Spleen (tissue), 13 donors: ENCODE measurements at regions of chr1 and their contacts with region 1.

Region 1: DNA sequence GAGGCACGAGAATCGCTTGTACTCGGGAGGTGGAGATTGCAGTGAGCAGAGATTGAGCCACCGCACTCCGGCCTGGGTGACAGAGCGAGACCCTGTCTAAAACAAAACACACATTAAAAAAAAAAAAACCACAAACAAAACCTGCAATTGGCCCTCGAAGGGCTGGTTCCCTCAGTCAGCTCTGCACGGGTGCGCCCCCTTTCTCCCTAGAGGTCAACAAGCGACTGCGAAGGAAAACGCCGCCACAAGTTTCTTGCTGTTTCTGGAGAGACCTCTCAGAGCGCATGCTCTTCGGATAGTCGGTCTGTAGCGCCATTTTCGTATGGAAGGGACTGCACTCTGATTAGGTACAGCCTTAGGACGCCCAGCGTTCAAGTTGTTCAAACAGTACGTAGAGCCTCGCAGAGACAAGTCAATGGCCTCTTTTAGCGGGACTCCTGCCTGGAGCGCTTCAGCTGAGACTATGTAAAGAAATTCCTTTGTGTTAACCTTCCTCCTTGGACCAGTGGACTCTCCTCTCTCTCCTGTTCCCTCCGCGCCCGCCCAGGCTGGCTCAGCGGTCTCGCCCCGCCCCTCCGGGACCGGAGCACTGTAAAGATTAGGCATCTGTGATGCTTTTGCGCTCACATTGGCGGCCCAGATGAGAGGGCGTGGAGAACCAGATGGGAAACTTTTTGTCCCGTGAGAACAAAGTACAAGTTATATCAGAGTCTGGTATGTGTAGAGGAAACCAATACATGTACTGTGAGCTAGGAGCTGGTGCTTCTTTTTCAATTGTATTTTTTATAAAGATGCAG is 1.0 kb upstream of the CDC14A start:
- DNase-seq: peak; percentile 94
- H3K4me3 ChIP-seq: peak overlapping the region; percentile 77 to 98 (median 96)
- H3K27ac ChIP-seq: peak overlapping the region; percentile 88 to 96 (median 94)
- H3K4me1 ChIP-seq: peaks cover 24 to 41% (median 36%) of the 10 kb centered on the region in 6 donors
- H3K27me3 ChIP-seq: no peaks in the 10 kb centered on the region
- CTCF ChIP-seq: peak in 8 of 11 experiments; percentile 9 to 50 (median 40)
- POLR2A ChIP-seq: peak in 1 of 3 donors; percentile 61

Region 2: DNA sequence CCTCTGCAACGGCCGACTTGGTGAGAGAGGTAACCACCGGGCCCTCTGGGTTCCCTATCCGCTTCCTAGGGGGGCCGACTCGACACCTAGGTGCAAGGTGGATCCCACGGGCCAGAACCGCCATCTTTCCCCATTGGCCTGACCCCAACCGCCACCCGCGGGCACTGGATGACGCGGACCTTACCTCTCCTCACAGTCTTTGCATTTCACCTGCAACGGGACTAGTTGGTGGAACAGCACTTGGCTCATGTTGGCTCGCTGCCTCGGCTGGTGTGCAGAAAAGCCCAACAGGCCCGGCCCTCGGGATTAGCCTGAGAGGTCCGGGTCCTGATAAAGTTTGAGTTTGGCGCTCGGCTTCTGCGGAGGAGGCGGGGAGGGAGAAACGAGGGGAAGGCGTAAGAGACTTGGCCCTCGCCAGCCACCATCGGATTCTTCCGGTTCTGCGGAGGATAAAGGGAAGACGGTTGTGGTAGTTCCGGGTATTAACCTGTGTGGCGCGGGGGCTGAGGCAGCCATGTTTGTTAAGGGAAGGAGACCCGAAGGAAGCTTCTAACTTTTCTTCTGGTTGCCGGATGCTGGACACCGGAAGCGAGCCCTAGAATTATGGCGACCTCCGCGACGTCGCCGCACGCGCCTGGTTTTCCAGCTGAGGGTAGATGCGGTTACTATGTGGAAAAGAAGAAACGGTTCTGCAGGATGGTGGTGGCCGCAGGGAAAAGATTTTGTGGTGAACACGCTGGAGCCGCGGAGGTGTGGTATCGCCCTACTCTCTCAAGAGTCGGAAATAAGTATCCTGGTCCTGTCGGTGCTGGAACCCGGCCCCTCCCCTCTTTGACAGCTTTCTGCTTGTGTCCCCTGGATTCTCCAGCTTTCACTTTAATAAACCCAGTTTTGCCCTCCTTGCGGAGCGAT is 218.5 kb before region 1 on chr1 and contains the starts of genes SASS6 and TRMT13:
- intact Hi-C with region 1: loop called (anchors 10 kb)
- DNase-seq: peak; percentile 98
- H3K4me3 ChIP-seq: peak within 1 kb of the TSS; percentile 77 to 94 (median 82)
- H3K27ac ChIP-seq: peak within 1 kb of the TSS; percentile 65 to 89 (median 80)
- H3K4me1 ChIP-seq: peaks cover 18 to 62% (median 41%) of the 10 kb centered on the region in 6 donors
- H3K27me3 ChIP-seq: no peaks in the 10 kb centered on the region
- CTCF ChIP-seq: peak in 7 of 11 experiments; percentile 8 to 57 (median 27)
- POLR2A ChIP-seq: peak in 1 of 3 donors; percentile 47
- total RNA-seq, gene SASS6: 3.7 to 9.2 (median 4.6) TPM
- total RNA-seq, gene TRMT13: 20.9 to 37.6 (median 27.9) TPM

Region 3: GRCh38 chr1:100265931-100266740 is 85.2 kb before region 1 on chr1 and contains the start of gene RTCA:
- intact Hi-C with region 1: loop called (anchors 10 kb)
- DNase-seq: peak; percentile 99
- H3K4me3 ChIP-seq: peak within 1 kb of the TSS; percentile 58 to 96 (median 90)
- H3K27ac ChIP-seq: peak within 1 kb of the TSS; percentile 65 to 93 (median 90)
- H3K4me1 ChIP-seq: peaks cover 27 to 62% (median 48%) of the 10 kb centered on the region in 6 donors
- H3K27me3 ChIP-seq: no peaks in the 10 kb centered on the region
- CTCF ChIP-seq: peak in 1 of 11 experiments; percentile 19
- POLR2A ChIP-seq: peak in 2 of 3 donors; percentile 66 to 81
- total RNA-seq, gene RTCA: 26.3 to 42.6 (median 33.1) TPM

Region 4: DNA sequence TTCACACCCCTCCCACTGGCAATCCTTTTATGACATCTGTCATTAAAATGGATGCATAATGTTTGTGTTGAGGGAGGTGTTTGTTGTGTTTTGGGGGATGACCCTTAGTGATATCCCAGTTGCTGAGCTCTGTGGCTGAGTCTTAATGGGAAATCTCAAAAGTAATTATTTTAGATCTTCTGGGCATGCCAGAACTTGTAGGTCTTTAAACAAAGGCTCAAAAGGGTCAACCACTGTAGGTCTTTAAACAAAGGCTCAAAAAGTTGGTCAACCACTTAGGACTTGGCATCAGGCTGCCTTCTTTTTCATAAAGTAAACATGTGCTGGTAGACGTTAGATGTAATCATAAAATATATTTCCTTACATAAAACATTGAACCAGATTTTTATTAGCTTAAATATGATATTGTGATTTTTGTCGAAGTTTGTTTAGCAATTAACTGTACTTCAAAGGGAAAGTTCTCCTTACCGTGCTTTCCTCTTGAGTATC is 79.1 kb after region 1 on chr1:
- intact Hi-C with region 1: no loop called
- DNase-seq: no peak
- H3K4me3 ChIP-seq: no peak overlapping the region
- H3K27ac ChIP-seq: no peak overlapping the region
- H3K4me1 ChIP-seq: no peaks in the 10 kb centered on the region
- H3K27me3 ChIP-seq: no peaks in the 10 kb centered on the region
- CTCF ChIP-seq: no peak
- POLR2A ChIP-seq: no peak

Region 5: GRCh38 chr1:100459358-100460114 is 108.2 kb after region 1 on chr1:
- intact Hi-C with region 1: loop called (anchors 10 kb)
- DNase-seq: peak; percentile 86
- H3K4me3 ChIP-seq: no peak overlapping the region
- H3K27ac ChIP-seq: peak overlapping the region in 3 of 8 donors; percentile 3 to 14 (median 9)
- H3K4me1 ChIP-seq: peaks cover 10 to 43% (median 24%) of the 10 kb centered on the region in 6 donors
- H3K27me3 ChIP-seq: no peaks in the 10 kb centered on the region
- CTCF ChIP-seq: peak; percentile 69 to 89 (median 85)
- POLR2A ChIP-seq: no peak